IMR-90 (cell line): ENCODE measurements at regions of chr4 and their contacts with region 1.

Region 1: DNA sequence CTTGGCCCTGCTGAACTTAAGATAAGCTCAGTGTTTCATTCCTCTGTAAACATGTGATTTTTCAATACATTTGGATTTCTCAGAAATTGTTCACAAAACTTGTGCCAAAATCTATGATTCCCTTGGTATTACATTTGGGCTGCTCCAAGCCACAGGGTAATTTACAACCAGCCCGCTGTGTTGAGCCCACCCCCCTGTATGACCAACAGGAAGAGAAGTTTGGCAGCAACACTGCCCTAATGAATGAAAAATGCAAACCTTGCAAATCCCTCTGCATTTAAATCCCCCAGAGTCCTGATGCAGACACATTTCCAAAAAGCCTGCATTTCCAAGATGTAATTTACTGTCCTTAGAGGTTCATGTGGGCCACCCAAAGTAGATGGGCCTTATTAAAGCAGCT is 34.1 kb upstream of the GAB1 start:
- DNase-seq: peak; percentile 13
- ATAC-seq: peak; percentile 53; the same call in 1 of the 2 replicates
- H3K4me3 ChIP-seq: no peak overlapping the region
- H3K27ac ChIP-seq: no peak overlapping the region
- H3K4me1 ChIP-seq: peaks cover 1% of the 10 kb centered on the region; the same call in 1 of the 2 replicates
- H3K27me3 ChIP-seq: no peaks in the 10 kb centered on the region
- CTCF ChIP-seq: no peak
- POLR2A ChIP-seq: no peak
- RAD21 ChIP-seq: no peak

Region 2: GRCh38 chr4:143178923-143179322 is 123.6 kb before region 1 on chr4:
- CTCF ChIA-PET with region 1: no interaction called
- POLR2A ChIA-PET with region 1: interaction called, 14 read pairs
- dilution Hi-C with region 1: no loop called
- in situ Hi-C with region 1: no loop called
- intact Hi-C with region 1: no loop called
- DNase-seq: no peak
- ATAC-seq: no peak
- H3K4me3 ChIP-seq: no peak overlapping the region
- H3K27ac ChIP-seq: no peak overlapping the region
- H3K4me1 ChIP-seq: no peaks in the 10 kb centered on the region
- H3K27me3 ChIP-seq: no peaks in the 10 kb centered on the region
- CTCF ChIP-seq: no peak
- POLR2A ChIP-seq: no peak
- RAD21 ChIP-seq: no peak

Region 3: DNA sequence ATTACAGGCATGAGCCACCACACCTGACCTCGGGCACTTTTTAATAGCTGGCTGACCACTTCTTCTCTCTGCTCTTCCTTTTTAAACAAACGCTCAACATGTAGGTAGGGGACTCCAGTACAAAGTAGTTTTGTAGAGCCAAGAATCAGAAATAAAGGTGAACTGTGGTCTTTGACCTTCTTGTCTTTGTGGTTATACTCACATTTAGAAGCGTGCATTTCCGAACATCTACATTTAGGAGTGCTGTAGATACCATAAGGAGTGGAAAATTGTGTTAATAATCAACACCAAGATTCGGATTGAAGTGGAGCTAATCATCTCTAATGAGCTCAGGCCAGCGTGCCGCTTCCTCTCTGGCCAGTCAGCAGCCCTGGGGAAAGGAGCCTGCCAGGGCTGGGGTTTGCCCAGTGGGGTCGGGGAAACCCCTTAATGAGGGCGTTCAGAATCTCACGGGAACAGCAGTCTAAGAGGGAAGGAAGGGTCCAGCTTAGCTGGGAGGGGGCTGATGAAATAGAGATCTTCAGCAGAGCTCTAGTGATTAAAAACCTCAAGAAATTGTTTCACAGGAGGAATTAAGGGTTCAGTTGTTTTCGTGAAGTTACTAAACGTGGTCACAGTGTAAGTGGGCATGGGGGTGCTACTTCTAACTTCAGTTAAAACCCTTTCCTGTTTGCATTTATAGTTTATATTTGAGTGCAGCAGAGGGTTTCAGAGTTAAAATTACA is 115.3 kb after region 1 on chr4:
- CTCF ChIA-PET with region 1: no interaction called
- POLR2A ChIA-PET with region 1: no interaction called
- dilution Hi-C with region 1: no loop called
- in situ Hi-C with region 1: no loop called
- intact Hi-C with region 1: no loop called
- DNase-seq: no peak
- ATAC-seq: no peak
- H3K4me3 ChIP-seq: no peak overlapping the region
- H3K27ac ChIP-seq: no peak overlapping the region
- H3K4me1 ChIP-seq: peaks cover 1% of the 10 kb centered on the region; the same call in 1 of the 2 replicates
- H3K27me3 ChIP-seq: no peaks in the 10 kb centered on the region
- CTCF ChIP-seq: no peak
- POLR2A ChIP-seq: no peak
- RAD21 ChIP-seq: no peak